ENCODE measurements at regions of chr3 and their contacts with region 1.

Region 1: GRCh38 chr3:11835028-11835639 is 11.6 kb downstream of the TAMM41 start:
- DNase-seq: no peak
- H3K4me3 Mint-ChIP-seq: no peak overlapping the region
- H3K27ac Mint-ChIP-seq: no peak overlapping the region
- H3K4me1 Mint-ChIP-seq: no peaks in the 10 kb centered on the region
- H3K27me3 Mint-ChIP-seq: no peaks in the 10 kb centered on the region

Region 2: DNA sequence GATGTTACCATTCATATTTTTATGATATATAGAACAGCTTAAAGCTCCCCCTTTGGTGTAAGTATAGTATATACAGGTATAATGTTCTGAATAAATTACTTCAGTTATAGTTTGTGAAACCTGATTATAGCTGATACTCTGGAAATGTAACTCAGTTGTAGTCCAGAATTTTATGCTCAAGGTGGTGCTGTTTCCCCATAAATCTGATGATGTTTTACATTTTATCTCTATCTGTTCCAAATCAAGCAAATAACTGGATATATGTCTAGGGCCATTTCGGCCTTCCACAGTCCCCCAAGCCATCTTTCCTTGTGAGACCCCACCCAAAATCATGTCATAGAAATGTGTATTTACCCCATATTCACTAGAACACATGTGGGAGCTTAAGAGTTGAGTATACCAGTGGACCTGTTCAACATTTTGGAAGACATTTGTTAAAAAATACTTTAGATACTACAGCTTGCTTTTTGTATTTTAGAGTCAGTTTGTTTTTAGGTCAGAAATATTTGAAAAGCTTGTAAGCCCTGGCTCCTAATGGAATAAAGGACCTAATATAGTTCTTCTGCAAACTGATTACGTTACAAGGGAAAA is 455.8 kb before region 1 on chr3:
- CTCF ChIA-PET with region 1: no interaction called
- intact Hi-C with region 1: loop called (anchors 1 kb)
- DNase-seq: no peak
- H3K4me3 Mint-ChIP-seq: no peak overlapping the region
- H3K27ac Mint-ChIP-seq: no peak overlapping the region
- H3K4me1 Mint-ChIP-seq: no peaks in the 10 kb centered on the region
- H3K27me3 Mint-ChIP-seq: no peaks in the 10 kb centered on the region

Region 3: DNA sequence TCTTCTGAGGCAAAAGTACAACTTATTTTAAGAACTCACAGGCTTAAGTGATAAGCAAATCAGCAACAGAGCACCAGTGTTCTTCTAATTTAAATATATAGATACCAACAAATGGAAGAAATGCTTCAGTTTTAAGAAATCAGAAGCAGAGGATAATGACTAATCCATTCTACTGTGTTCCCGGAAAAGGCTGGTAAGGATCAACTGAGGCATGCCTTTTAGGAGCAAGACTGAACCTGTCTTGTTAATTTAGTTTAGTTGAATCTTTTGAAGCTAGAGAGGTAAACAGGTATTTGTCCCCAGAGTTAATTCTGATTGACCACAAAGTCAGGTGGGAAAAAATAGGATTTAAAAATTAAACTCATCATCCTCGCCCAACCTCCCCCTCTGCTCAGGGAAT is 40.2 kb before region 1 on chr3:
- CTCF ChIA-PET with region 1: no interaction called
- intact Hi-C with region 1: no loop called
- DNase-seq: no peak
- H3K4me3 Mint-ChIP-seq: no peak overlapping the region
- H3K27ac Mint-ChIP-seq: no peak overlapping the region
- H3K4me1 Mint-ChIP-seq: no peaks in the 10 kb centered on the region
- H3K27me3 Mint-ChIP-seq: no peaks in the 10 kb centered on the region

Region 4: DNA sequence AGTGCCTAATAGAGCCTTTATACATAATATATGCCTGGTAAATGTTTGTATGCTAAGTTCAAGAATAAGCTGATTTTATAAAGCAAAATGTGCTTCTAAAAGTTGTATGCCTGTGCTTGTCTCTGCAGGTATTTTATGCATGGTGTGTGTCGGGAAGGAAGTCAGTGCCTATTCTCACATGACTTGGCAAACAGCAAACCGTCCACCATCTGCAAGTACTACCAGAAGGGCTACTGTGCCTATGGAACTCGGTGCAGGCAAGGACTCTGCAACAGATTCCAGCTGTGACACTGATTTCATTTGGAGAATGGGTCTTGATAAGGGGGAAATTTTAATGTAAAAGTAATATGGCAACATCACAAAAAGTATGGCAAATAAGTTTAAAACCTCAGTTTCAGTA is 733.6 kb after region 1 on chr3:
- CTCF ChIA-PET with region 1: no interaction called
- intact Hi-C with region 1: no loop called
- DNase-seq: no peak
- H3K4me3 Mint-ChIP-seq: no peak overlapping the region
- H3K27ac Mint-ChIP-seq: peak overlapping the region; percentile 24
- H3K4me1 Mint-ChIP-seq: peaks cover 18% of the 10 kb centered on the region
- H3K27me3 Mint-ChIP-seq: no peaks in the 10 kb centered on the region

Measured in activated naive CD4-positive, alpha-beta T cell treated with anti-CD3 and anti-CD28 coated beads for 36 hours (primary cell).